ENCODE measurements at regions of chr14 and their contacts with region 1.

Region 1: DNA sequence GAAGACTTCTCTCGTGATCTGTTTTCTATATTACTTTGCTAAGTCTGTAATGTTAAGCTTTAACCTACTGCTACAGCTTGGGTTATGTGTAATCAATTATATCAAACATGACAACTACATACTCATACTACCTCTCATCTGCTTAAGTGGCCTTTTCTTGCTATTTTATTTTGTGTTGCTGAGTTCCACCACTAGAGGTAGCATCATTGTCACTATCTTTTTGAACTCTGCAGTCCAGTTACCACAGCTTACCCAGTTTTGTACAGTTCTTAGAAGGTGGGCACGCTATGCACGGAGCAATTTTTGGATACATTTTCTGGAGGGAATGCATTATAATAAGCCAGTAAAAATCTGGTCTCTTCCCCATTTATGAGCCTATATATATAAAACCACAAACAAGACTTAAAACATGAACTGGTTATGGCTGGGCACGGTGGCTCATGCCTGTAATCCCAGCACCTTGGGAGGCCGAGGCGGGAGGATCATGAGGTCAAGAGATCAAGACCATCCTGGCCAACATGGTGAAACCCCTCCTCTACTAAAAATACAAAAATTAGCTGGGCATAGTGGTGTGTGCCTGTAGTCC is 48.5 kb downstream of the SAV1 start:
- DNase-seq: peak; percentile 66

Region 2: DNA sequence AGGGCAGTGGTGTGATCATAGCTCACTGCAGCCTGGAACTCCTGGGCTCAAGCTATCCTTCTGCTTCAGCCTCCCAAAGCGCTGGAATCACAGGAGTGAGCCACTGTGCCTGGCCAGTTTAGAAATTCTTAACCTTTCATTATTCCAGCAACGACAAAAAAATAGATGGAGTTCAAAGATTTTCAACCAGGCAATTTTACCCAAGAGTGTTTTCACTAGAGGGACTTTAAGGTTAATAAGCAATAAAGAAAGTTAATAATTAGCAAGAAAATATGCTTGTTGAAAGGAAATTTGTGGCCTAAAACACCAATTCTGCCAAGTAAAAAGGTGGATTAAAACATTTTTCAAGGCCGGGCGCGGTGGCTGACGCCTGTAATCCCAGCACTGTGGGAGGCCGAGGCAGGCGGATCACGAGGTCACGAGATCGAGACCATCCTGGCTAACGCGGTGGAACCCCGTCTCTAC is 237.8 kb before region 1 on chr14:
- in situ Hi-C with region 1: no loop called
- DNase-seq: no peak

Region 3: GRCh38 chr14:50714450-50715073 is 94.9 kb after region 1 on chr14:
- in situ Hi-C with region 1: loop called (anchors 25 kb)
- DNase-seq: peak; percentile 66